ENCODE measurements at regions of chr14 and their contacts with region 1.

Region 1: GRCh38 chr14:106691601-106692291 is 1165.4 kb downstream of the TMEM121 start:
- DNase-seq: peak; percentile 72
- ATAC-seq: peak; percentile 16
- H3K4me3 Mint-ChIP-seq: no peak overlapping the region
- H3K27ac Mint-ChIP-seq: no peak overlapping the region
- H3K4me1 Mint-ChIP-seq: peaks cover 32% of the 10 kb centered on the region
- H3K27me3 Mint-ChIP-seq: peaks cover 10% of the 10 kb centered on the region

Region 2: GRCh38 chr14:106681568-106681967 is 10.2 kb before region 1 on chr14:
- CTCF ChIA-PET with region 1: interaction called, 21 read pairs
- POLR2A ChIA-PET with region 1: no interaction called
- DNase-seq: no peak
- ATAC-seq: peak; percentile 92
- H3K4me3 Mint-ChIP-seq: no peak overlapping the region
- H3K27ac Mint-ChIP-seq: no peak overlapping the region
- H3K4me1 Mint-ChIP-seq: no peaks in the 10 kb centered on the region
- H3K27me3 Mint-ChIP-seq: peaks cover 39% of the 10 kb centered on the region

Region 3: GRCh38 chr14:106802423-106803364 is 110.9 kb after region 1 on chr14:
- CTCF ChIA-PET with region 1: no interaction called
- POLR2A ChIA-PET with region 1: no interaction called
- DNase-seq: no peak
- ATAC-seq: no peak
- H3K4me3 Mint-ChIP-seq: no peak overlapping the region
- H3K27ac Mint-ChIP-seq: no peak overlapping the region
- H3K4me1 Mint-ChIP-seq: no peaks in the 10 kb centered on the region
- H3K27me3 Mint-ChIP-seq: peaks cover 65% of the 10 kb centered on the region

Measured in activated CD8-positive, alpha-beta T cell treated with anti-CD3 and anti-CD28 coated beads, Interleukin-2, amount 10 ng/mL, durations not matched to agents 7 days and 5 days (primary cell).